SK-N-SH (cell line): ENCODE measurements at regions of chr2 and their contacts with region 1.

Region 1: DNA sequence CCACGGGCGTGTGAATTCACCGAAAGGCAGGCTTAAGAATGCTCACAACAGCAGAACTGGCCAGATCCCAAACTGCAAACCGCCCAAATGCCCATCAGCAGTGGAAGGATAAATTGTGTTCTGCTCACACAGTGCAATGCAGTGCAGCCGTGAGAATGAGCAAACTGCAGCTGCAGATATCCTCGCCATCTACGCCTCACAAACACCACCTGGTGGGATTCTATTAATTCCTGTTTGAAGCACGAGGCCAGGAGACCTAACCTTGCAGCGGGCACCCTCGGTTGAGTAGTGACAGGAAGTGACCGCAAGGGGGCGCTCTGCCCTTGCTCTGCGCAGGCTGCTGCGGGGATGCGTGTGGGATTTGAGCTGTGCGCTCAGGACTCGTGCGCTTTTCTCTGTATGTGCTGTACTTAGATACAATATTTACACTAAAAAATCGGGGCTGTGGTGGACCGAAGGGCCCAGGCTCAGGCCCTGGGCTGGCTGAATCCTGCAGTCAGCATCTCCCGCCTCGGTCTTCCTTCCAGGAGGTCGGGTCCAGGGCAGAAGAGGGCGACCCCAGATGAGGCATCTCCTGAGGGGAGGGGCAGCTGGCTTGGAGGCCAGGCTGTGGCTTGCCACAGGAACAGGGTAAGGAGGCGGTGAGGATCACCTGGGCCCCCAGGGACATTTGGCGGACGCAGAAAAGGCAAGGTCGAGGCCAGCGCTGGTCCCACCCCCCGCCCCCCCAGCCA is 19.8 kb upstream of the PDIA6 start:
- DNase-seq: peak; percentile 98
- H3K4me3 ChIP-seq: peak overlapping the region; percentile 14 to 33; a peak in 2 of 4 replicates
- H3K27ac ChIP-seq: no peak overlapping the region
- H3K4me1 ChIP-seq: peaks cover 0 to 29% of the 10 kb centered on the region in 2 experiments; a peak in 1 of 4 replicates
- H3K27me3 ChIP-seq: peaks cover 33% of the 10 kb centered on the region; the same call in 1 of the 2 replicates
- CTCF ChIP-seq: peak; percentile 99
- EP300 ChIP-seq: no peak
- RAD21 ChIP-seq: peak; percentile 100

Region 2: DNA sequence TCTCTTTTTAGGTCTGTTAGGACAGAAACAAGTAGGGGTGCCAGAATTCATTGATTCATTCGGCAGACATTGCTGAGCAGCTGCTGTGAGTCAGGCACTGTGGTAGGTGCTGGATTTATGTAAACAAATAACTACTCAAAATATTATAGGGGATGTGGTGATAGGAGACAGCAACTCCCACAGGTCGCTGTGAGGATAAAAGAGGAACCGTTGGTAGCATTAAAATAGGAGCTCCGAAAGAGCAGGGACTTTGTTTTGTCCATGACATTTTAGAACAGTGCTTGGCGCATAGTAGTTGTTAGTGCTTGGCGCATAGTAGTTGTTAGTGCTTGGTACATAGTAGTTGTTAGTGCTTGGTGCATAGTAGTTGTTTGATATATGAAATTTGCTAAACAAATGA is 81.8 kb before region 1 on chr2:
- CTCF ChIA-PET with region 1: no interaction called
- POLR2A ChIA-PET with region 1: no interaction called
- DNase-seq: no peak
- H3K4me3 ChIP-seq: no peak overlapping the region
- H3K27ac ChIP-seq: no peak overlapping the region
- H3K4me1 ChIP-seq: no peaks in the 10 kb centered on the region
- H3K27me3 ChIP-seq: no peaks in the 10 kb centered on the region; the same call in 1 of the 2 replicates
- CTCF ChIP-seq: no peak
- EP300 ChIP-seq: no peak
- RAD21 ChIP-seq: no peak

Region 3: DNA sequence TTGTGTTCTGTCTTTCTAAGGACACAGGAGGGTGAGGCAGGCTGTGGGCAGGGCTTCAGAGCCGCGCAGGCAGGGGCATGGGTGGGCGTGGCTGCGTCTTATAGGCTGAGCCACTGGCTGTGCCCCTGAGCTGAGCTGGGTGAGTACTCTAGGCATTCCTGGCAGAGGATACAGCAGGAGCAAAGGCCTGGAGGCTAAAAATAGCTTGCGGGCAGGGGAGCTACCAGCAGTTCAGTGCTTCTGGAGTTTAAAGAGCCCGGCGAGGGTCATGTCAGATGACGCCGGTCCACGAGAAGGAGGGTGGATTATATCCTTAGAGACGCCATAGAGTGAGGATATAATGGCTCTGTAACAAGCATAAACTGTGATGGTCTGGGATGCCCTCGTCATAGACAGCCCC is 11.7 kb after region 1 on chr2:
- CTCF ChIA-PET with region 1: interaction called, 41 read pairs
- POLR2A ChIA-PET with region 1: no interaction called
- DNase-seq: peak; percentile 51
- H3K4me3 ChIP-seq: no peak overlapping the region
- H3K27ac ChIP-seq: no peak overlapping the region
- H3K4me1 ChIP-seq: no peaks in the 10 kb centered on the region; a peak in 1 of 4 replicates
- H3K27me3 ChIP-seq: no peaks in the 10 kb centered on the region
- CTCF ChIP-seq: no peak
- EP300 ChIP-seq: no peak
- RAD21 ChIP-seq: no peak

Region 4: DNA sequence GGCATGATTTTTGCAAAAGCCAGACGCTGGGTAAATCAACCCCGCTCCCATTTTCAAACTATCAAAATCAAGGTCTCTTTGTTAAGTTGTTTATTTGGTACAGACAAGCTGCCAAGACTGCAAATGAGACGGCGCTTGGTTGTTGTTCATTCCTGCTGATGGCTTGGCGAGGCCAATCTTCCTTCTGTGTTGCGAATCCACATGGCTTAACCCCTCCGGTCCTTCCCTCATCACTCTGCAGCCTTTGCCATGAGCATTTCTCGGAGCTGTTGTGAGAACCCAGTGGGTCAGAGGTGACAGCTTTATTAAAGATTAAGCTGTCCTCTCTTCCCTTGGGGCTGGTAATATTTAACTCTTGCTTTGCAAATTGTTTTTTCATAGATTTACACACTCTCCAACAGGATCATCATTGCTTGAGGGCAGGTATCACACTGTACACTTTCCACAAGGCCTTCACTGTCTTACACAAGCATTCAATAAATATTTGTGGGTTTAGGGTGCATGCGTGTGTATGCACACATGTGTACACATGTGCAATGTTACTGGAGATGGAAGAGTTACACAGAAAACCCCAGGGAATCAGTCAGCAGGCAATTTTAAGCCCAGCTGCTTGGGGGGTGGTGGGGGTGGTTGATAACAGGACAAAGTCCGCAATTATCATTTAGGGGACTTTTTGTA is 51.6 kb after region 1 on chr2:
- CTCF ChIA-PET with region 1: interaction called, 22 read pairs
- POLR2A ChIA-PET with region 1: no interaction called
- DNase-seq: no peak
- H3K4me3 ChIP-seq: no peak overlapping the region
- H3K27ac ChIP-seq: no peak overlapping the region
- H3K4me1 ChIP-seq: peaks cover 4 to 8% of the 10 kb centered on the region in 2 experiments; a peak in 2 of 4 replicates
- H3K27me3 ChIP-seq: no peaks in the 10 kb centered on the region
- CTCF ChIP-seq: no peak
- EP300 ChIP-seq: no peak
- RAD21 ChIP-seq: no peak

Region 5: GRCh38 chr2:10911261-10912075 is 79.1 kb after region 1 on chr2 and contains the start of gene KCNF1:
- CTCF ChIA-PET with region 1: interaction called, 192 read pairs
- POLR2A ChIA-PET with region 1: no interaction called
- DNase-seq: peak; percentile 90
- H3K4me3 ChIP-seq: peak within 1 kb of the TSS; percentile 51 to 63
- H3K27ac ChIP-seq: no peak within 1 kb of the TSS
- H3K4me1 ChIP-seq: peaks cover 0 to 12% of the 10 kb centered on the region in 2 experiments; a peak in 1 of 4 replicates
- H3K27me3 ChIP-seq: peaks cover 14% of the 10 kb centered on the region; the same call in 1 of the 2 replicates
- CTCF ChIP-seq: peak; percentile 56
- EP300 ChIP-seq: no peak
- RAD21 ChIP-seq: peak; percentile 41
- polyA plus RNA-seq, gene KCNF1: 0.16 and 0.23 TPM in 2 replicates

Region 6: DNA sequence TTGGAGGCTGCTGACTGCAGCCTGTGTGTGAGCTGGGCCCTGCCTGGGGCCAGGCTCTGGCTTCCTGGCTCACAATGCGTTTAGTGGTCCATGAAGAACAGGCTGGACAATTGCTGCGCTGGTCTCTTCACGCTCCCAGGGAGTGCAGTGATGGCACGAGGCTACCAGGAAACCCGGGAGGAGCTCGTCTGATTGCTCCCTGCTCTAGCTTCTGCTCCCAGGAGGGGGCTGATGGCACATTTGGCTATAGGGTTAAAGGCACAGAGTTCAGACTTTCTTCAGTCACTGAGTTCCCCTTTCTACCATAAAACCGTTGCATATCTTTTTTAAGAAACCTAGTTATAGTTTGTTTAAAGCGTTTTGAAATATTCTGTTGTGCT is 139.5 kb after region 1 on chr2:
- CTCF ChIA-PET with region 1: interaction called, 16 read pairs
- POLR2A ChIA-PET with region 1: no interaction called
- DNase-seq: peak; percentile 68
- H3K4me3 ChIP-seq: no peak overlapping the region
- H3K27ac ChIP-seq: no peak overlapping the region
- H3K4me1 ChIP-seq: peaks cover 0 to 8% of the 10 kb centered on the region in 2 experiments; a peak in 1 of 4 replicates
- H3K27me3 ChIP-seq: peaks cover 47% of the 10 kb centered on the region
- CTCF ChIP-seq: no peak
- EP300 ChIP-seq: no peak
- RAD21 ChIP-seq: no peak

Region 7: GRCh38 chr2:11103984-11104793 is 271.8 kb after region 1 on chr2:
- CTCF ChIA-PET with region 1: interaction called, 10 read pairs
- POLR2A ChIA-PET with region 1: no interaction called
- DNase-seq: no peak
- H3K4me3 ChIP-seq: no peak overlapping the region
- H3K27ac ChIP-seq: no peak overlapping the region
- H3K4me1 ChIP-seq: no peaks in the 10 kb centered on the region
- H3K27me3 ChIP-seq: no peaks in the 10 kb centered on the region
- CTCF ChIP-seq: no peak
- EP300 ChIP-seq: no peak
- RAD21 ChIP-seq: no peak

Region 8: DNA sequence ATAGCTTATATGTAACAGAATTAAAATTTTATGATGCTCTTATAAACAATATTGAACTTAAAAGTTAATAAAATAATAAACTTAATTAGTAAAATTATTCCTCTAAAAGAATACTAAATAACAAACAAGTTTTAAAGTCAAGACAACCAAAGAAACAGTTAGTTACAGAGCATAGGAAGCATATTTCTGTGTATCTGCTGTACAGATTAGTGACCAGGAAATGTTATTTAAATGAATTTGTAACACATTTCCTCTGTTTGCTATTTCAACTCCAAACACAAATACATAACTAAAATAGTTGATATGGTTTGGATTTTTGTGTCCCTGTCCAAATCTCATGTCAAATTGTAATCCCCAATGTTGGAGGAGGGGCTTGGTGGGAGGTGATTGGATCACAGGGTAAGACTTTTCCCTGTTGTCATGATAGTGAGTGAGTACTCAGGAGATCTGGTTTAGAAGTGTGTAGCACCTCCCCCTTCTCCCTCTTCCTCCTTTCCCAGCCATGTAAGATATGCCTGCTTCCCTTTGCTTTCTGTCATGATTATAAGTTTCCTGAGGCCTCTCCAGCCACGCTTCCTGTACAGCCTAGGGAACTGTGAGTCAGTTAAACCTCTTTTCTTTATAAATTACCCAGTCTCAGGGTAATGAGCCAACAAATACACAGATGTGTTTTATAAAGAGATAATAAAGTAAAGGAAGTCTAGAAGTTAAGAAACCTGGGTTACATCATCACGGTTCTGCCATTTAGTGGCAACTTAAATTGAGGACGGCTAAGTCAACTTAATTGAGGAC is 460.3 kb after region 1 on chr2:
- CTCF ChIA-PET with region 1: no interaction called
- POLR2A ChIA-PET with region 1: no interaction called
- DNase-seq: no peak
- H3K4me3 ChIP-seq: no peak overlapping the region
- H3K27ac ChIP-seq: no peak overlapping the region
- H3K4me1 ChIP-seq: no peaks in the 10 kb centered on the region; a peak in 1 of 4 replicates
- H3K27me3 ChIP-seq: no peaks in the 10 kb centered on the region
- CTCF ChIP-seq: no peak
- EP300 ChIP-seq: no peak
- RAD21 ChIP-seq: no peak